Naive thymus-derived CD4-positive, alpha-beta T cell (primary cell): ENCODE measurements at regions of chr6 and their contacts with region 1.

Region 1: GRCh38 chr6:24933868-24934401 is 1.8 kb downstream of the RIPOR2 start:
- DNase-seq: peak in 7 of 9 donors; percentile 59 to 78 (median 72)
- ATAC-seq: peak; percentile 52
- H3K4me3 ChIP-seq: peak overlapping the region; percentile 89
- H3K4me3 Mint-ChIP-seq: peak overlapping the region; percentile 89 to 100 (median 98)
- H3K27ac ChIP-seq: peak overlapping the region; percentile 85
- H3K27ac Mint-ChIP-seq: peak overlapping the region; percentile 88 to 99 (median 93)
- H3K4me1 ChIP-seq: peaks cover 37 to 44% of the 10 kb centered on the region in 2 donors
- H3K4me1 Mint-ChIP-seq: peaks cover 44 to 65% (median 50%) of the 10 kb centered on the region in 7 donors
- H3K27me3 ChIP-seq: no peaks in the 10 kb centered on the region
- H3K27me3 Mint-ChIP-seq: no peaks in the 10 kb centered on the region

Region 2: DNA sequence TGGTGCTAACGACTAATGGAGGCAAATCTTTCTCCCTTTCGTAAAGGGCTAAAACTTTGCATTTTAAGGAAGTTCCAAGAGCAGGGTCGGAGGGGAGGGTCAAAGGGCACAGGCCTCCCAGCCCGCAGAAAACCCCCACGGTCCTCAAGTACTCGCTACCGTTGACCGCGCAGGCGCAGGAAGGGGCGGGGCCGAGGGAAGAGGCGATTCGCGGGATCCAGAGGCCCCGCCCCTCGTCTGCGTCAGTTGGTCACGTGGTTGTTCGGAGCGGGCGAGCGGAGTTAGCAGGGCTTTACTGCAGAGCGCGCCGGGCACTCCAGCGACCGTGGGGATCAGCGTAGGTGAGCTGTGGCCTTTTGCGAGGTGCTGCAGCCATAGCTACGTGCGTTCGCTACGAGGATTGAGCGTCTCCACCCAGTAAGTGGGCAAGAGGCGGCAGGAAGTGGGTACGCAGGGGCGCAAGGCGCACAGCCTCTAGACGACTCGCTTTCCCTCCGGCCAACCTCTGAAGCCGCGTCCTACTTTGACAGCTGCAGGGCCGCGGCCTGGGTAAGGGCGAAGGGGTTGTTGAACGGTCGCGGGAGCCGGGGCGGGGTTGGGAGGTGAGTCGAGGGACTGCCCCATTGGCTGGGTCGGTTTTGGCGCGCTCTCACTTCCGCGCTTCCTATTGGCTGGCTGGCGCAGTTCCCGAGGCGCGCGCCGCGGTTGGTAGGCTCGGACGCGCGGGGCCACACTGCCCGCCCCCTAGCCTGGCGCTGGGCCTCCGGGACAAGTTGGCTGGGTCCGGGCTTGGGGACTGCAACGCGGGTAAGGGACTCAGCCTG is 159.0 kb before region 1 on chr6 and contains the start of gene GMNN:
- CTCF ChIA-PET with region 1: no interaction called
- POLR2A ChIA-PET with region 1: interaction called, 3 read pairs
- intact Hi-C with region 1: loop called in 1 of 2 experiments (anchors 5 kb)
- DNase-seq: peak; percentile 91 to 99 (median 94)
- ATAC-seq: peak; percentile 95
- H3K4me3 ChIP-seq: peak within 1 kb of the TSS; percentile 93
- H3K4me3 Mint-ChIP-seq: peak within 1 kb of the TSS; percentile 98 to 99 (median 98)
- H3K27ac ChIP-seq: peak within 1 kb of the TSS; percentile 90
- H3K27ac Mint-ChIP-seq: peak within 1 kb of the TSS; percentile 91 to 98 (median 97)
- H3K4me1 ChIP-seq: peaks cover 6 to 7% of the 10 kb centered on the region in 2 donors
- H3K4me1 Mint-ChIP-seq: peaks cover 10 to 38% (median 21%) of the 10 kb centered on the region in 7 donors
- H3K27me3 ChIP-seq: no peaks in the 10 kb centered on the region
- H3K27me3 Mint-ChIP-seq: no peaks in the 10 kb centered on the region
- total RNA-seq, gene GMNN: 5.1 to 54.6 (median 7.0) TPM

Region 3: GRCh38 chr6:24902782-24903181 is 31.2 kb before region 1 on chr6:
- CTCF ChIA-PET with region 1: interaction called, 5 read pairs
- POLR2A ChIA-PET with region 1: interaction called, 644 read pairs
- intact Hi-C with region 1: loop called in 1 of 2 experiments (anchors 5 kb)
- DNase-seq: no peak
- ATAC-seq: no peak
- H3K4me3 ChIP-seq: no peak overlapping the region
- H3K4me3 Mint-ChIP-seq: peak overlapping the region; percentile 30 to 97 (median 59)
- H3K27ac ChIP-seq: peak overlapping the region; percentile 53
- H3K27ac Mint-ChIP-seq: peak overlapping the region; percentile 32 to 99 (median 91)
- H3K4me1 ChIP-seq: peaks cover 81 to 96% of the 10 kb centered on the region in 2 donors
- H3K4me1 Mint-ChIP-seq: peaks cover 69 to 99% (median 96%) of the 10 kb centered on the region in 7 donors
- H3K27me3 ChIP-seq: no peaks in the 10 kb centered on the region
- H3K27me3 Mint-ChIP-seq: no peaks in the 10 kb centered on the region

Region 4: GRCh38 chr6:24949020-24949569 is 15.2 kb after region 1 on chr6:
- CTCF ChIA-PET with region 1: interaction called, 223 read pairs
- POLR2A ChIA-PET with region 1: interaction called, 1,484 read pairs
- intact Hi-C with region 1: loop called (anchors 1 kb)
- DNase-seq: peak in 7 of 9 donors; percentile 67 to 93 (median 83)
- ATAC-seq: peak; percentile 72
- H3K4me3 ChIP-seq: peak overlapping the region; percentile 50
- H3K4me3 Mint-ChIP-seq: peak overlapping the region; percentile 71 to 86 (median 76)
- H3K27ac ChIP-seq: peak overlapping the region; percentile 75
- H3K27ac Mint-ChIP-seq: peak overlapping the region; percentile 92 to 98 (median 95)
- H3K4me1 ChIP-seq: peaks cover 62 to 68% of the 10 kb centered on the region in 2 donors
- H3K4me1 Mint-ChIP-seq: peaks cover 63 to 91% (median 75%) of the 10 kb centered on the region in 7 donors
- H3K27me3 ChIP-seq: no peaks in the 10 kb centered on the region
- H3K27me3 Mint-ChIP-seq: no peaks in the 10 kb centered on the region

Region 5: DNA sequence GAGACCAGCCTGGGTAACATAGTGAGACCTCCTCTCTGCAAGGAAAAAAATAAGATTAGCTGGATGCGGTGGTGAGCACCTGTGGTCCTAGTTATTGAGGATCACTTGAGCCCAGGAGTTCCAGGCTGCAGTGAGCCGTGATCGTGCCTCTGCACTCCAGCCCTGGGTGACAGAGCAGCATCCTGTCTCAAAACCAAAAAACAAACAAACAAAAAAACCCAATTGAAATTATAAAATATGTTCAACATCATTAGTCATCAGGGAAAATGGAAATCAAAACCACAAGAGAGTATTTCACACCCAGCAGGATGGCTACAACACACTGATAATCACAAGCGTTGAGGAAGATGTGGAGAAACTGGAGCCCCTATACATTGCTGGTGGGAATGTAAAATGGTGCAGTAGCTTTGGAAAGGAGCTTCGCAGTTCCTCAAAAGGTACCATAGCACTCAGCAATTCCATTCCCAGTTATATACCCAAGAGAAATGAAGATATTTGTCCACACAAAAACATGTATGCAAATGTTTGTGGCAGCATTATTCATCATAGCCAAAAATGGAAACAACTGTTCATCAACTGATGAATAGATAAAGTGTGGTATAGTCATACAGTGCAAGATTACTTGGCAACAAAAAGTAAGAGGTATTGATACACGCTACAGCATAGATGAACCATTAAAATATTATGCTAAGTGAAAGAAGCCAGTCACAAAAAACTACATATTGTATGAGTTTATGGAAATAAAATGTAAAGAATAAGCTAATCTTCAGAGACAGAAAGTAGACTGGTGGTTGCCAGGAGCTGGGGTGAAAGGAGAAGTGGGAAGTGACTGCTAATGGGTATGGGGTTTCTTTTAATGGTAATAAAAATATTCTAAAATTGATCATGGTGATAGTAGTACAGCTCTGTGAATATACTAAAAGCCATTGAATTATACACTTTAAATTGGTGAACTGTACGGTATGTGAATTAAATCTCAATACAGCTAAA is 40.5 kb after region 1 on chr6:
- CTCF ChIA-PET with region 1: interaction called, 8 read pairs
- POLR2A ChIA-PET with region 1: interaction called, 1,484 read pairs
- intact Hi-C with region 1: loop called in 1 of 2 experiments (anchors 1 kb)
- DNase-seq: peak in 1 of 9 donors; percentile 40
- ATAC-seq: peak; percentile 73
- H3K4me3 ChIP-seq: peak overlapping the region; percentile 6
- H3K4me3 Mint-ChIP-seq: peak overlapping the region in 3 of 10 donors; percentile 2 to 58 (median 20)
- H3K27ac ChIP-seq: no peak overlapping the region
- H3K27ac Mint-ChIP-seq: peak overlapping the region in 7 of 9 donors; percentile 1 to 90 (median 27)
- H3K4me1 ChIP-seq: peaks cover 19 to 31% of the 10 kb centered on the region in 2 donors
- H3K4me1 Mint-ChIP-seq: peaks cover 41 to 80% (median 72%) of the 10 kb centered on the region in 7 donors
- H3K27me3 ChIP-seq: no peaks in the 10 kb centered on the region
- H3K27me3 Mint-ChIP-seq: no peaks in the 10 kb centered on the region

Region 6: DNA sequence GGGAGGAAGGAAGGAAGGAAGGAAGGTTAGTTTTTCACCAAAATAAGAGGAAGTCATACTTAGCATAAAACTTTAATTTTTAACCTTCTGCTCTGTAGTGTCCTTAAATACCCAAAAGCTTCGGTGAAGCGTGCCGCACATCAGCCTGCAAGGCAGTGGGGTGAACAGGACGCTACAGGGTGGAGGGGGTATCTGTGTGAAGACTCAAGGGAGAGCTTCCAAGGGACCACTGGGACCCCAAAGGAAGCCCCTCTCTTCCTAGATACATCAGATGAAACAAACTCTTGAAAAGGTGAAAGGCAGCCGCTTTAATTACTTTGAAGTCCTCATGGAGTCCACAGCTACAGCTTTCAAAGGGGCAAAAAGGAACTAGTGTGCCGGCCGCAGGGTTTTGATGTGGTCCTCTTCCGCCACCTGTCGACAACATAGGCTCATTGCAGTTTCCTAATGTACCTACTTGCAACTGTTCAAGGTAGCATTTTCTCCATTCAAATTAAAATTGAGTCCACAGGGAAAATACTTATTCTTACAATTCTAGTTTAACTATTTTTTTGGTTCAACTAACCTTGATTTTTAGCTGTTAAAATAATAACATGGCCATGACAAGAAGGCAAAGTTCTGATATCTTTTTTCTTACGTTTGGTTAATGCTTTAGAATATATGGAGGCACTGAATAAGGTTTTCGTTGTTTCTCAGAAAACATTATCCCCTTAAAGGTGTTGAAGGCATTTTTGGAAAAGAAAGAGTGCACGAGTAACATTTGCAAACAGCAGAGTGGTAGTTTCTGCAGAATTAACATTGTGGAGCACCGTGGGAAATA is 136.8 kb after region 1 on chr6:
- CTCF ChIA-PET with region 1: interaction called, 4 read pairs
- POLR2A ChIA-PET with region 1: interaction called, 10 read pairs
- intact Hi-C with region 1: loop called (anchors 1 to 2 kb)
- DNase-seq: peak; percentile 54 to 85 (median 79)
- ATAC-seq: peak; percentile 99
- H3K4me3 ChIP-seq: no peak overlapping the region
- H3K4me3 Mint-ChIP-seq: peak overlapping the region in 8 of 10 donors; percentile 10 to 70 (median 50)
- H3K27ac ChIP-seq: no peak overlapping the region
- H3K27ac Mint-ChIP-seq: peak overlapping the region; percentile 43 to 92 (median 83)
- H3K4me1 ChIP-seq: peaks cover 0 to 3% of the 10 kb centered on the region in 2 donors
- H3K4me1 Mint-ChIP-seq: peaks cover 5 to 15% (median 9%) of the 10 kb centered on the region in 7 donors
- H3K27me3 ChIP-seq: no peaks in the 10 kb centered on the region
- H3K27me3 Mint-ChIP-seq: peaks cover 0 to 7% (median 0%) of the 10 kb centered on the region in 5 donors